Naive thymus-derived CD4-positive, alpha-beta T cell (primary cell): ENCODE measurements at regions of chr7 and their contacts with region 1.

Region 1: GRCh38 chr7:77331938-77332695 is 84.0 kb downstream of the GSAP start:
- DNase-seq: peak in 8 of 9 donors; percentile 15 to 49 (median 38)
- ATAC-seq: peak; percentile 78
- H3K4me3 ChIP-seq: no peak overlapping the region
- H3K4me3 Mint-ChIP-seq: peak overlapping the region in 2 of 10 donors; percentile 13 to 37
- H3K27ac ChIP-seq: no peak overlapping the region
- H3K27ac Mint-ChIP-seq: peak overlapping the region in 2 of 9 donors; percentile 55 to 74
- H3K4me1 ChIP-seq: peaks cover 18 to 34% of the 10 kb centered on the region in 2 donors
- H3K4me1 Mint-ChIP-seq: peaks cover 28 to 55% (median 42%) of the 10 kb centered on the region in 7 donors
- H3K27me3 ChIP-seq: no peaks in the 10 kb centered on the region
- H3K27me3 Mint-ChIP-seq: no peaks in the 10 kb centered on the region

Region 2: DNA sequence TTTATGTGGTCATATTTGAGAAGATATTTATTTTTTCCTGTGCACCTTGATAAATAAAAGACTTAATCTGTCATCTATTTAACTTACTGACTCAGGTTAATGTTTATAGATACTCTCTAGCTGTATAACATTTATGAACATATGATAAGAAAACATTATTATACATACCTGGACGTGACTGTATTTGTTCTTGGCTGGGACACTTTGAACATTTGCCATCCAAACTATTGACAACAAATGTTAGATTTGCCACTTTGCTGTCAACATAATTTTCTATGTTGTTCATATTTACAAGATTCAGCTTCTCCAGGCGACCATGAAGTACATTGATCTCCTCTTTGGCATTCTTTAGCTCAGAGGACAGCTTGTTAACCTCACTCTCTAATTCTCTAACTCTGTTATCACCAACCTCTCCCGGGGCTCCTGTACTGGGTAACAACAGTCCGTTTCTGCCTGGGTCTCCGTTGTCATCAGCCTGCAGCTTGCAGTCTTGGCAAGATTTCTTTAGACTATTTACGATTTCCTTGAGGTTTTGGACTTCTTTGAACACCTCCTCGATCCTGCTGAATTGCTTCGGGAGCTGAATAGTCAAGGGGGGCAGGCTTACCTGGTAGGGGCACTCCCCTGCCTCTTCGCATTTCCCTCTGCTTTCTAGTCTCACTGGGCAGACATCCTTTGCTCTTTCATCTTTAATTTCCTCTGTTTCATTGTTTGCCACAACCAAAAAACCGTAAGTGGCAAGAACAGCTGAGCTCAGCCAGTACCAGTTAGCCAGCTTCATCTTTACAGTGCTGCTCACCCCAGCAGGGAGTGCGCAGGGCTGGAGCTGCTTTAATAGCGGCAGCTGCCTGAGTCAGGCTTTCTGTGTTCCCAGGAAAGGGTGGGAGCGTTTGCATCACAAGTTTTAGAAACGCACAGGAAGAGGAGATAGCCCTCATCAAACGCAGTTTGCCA is 132.8 kb before region 1 on chr7 and contains the start of gene FGL2:
- CTCF ChIA-PET with region 1: no interaction called
- POLR2A ChIA-PET with region 1: interaction called, 3 read pairs
- intact Hi-C with region 1: loop called in 1 of 2 experiments (anchors 2 kb)
- DNase-seq: peak in 6 of 9 donors; percentile 13 to 36 (median 33)
- ATAC-seq: peak; percentile 88
- H3K4me3 ChIP-seq: peak within 1 kb of the TSS; percentile 50
- H3K4me3 Mint-ChIP-seq: peak within 1 kb of the TSS; percentile 82 to 90 (median 84)
- H3K27ac ChIP-seq: peak within 1 kb of the TSS; percentile 58
- H3K27ac Mint-ChIP-seq: peak within 1 kb of the TSS; percentile 49 to 84 (median 81)
- H3K4me1 ChIP-seq: peaks cover 0 to 20% of the 10 kb centered on the region in 2 donors
- H3K4me1 Mint-ChIP-seq: peaks cover 18 to 49% (median 34%) of the 10 kb centered on the region in 7 donors
- H3K27me3 ChIP-seq: no peaks in the 10 kb centered on the region
- H3K27me3 Mint-ChIP-seq: no peaks in the 10 kb centered on the region
- total RNA-seq, gene FGL2: 2.8 to 129 (median 3.2) TPM